MCF 10A (cell line): ENCODE measurements at regions of chr2 and their contacts with region 1.

Region 1: GRCh38 chr2:181742922-181743722 is 62.8 kb upstream of the NEUROD1 start:
- DNase-seq: peak; percentile 69
- H3K4me3 Mint-ChIP-seq: no peak overlapping the region
- H3K27ac Mint-ChIP-seq: no peak overlapping the region
- H3K4me1 Mint-ChIP-seq: peaks cover 6% of the 10 kb centered on the region
- H3K27me3 Mint-ChIP-seq: no peaks in the 10 kb centered on the region
- CTCF ChIP-seq: peak; percentile 53

Region 2: GRCh38 chr2:182077451-182078142 is 334.5 kb after region 1 on chr2:
- CTCF ChIA-PET with region 1: interaction called, 70 read pairs
- POLR2A ChIA-PET with region 1: interaction called, 7 read pairs
- intact Hi-C with region 1: loop called (anchors 1 kb)
- DNase-seq: peak; percentile 85
- H3K4me3 Mint-ChIP-seq: no peak overlapping the region
- H3K27ac Mint-ChIP-seq: no peak overlapping the region
- H3K4me1 Mint-ChIP-seq: no peaks in the 10 kb centered on the region
- H3K27me3 Mint-ChIP-seq: no peaks in the 10 kb centered on the region
- CTCF ChIP-seq: peak; percentile 70